GM18951 (cell line): ENCODE measurements at regions of chr6 and their contacts with region 1.

Region 1: GRCh38 chr6:116298973-116299372 is 19.2 kb upstream of the TSPYL1 start:
- POLR2A ChIP-seq: no peak

Region 2: DNA sequence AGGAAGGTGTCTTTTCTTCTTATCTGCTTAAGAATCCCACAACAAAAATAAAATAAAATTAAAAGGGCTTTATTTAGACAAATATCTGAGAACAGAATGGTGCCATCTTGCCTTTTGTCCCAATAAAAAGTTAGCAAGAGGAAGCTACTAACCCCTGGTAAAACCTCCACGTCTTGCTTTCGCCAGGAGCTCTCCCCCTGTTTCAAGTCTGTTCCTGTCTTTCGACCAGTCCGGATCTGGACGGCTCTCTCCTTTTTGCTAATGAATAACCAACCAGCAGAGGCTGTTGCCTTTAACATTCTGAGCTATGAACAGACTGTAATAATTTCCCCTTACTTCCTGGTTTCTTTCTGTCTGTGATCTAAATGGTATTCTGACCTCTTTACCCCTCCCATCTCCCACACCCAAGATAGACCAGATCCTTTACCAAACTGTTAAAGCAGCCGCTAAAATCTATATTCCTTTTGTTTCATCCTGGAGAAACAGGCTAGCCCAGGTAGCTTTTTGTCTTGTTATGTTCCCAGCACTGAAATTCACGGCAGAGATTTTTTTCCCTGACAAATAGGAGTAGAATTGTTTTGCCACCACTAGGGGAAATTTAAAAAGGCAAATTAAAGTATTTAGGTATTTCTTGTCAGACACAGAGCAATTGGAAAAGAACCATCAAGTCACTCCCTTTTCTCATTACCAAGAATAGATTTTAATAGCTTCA is 238.2 kb before region 1 on chr6 and contains the start of gene FRK:
- in situ Hi-C with region 1: no loop called
- POLR2A ChIP-seq: no peak

Region 3: DNA sequence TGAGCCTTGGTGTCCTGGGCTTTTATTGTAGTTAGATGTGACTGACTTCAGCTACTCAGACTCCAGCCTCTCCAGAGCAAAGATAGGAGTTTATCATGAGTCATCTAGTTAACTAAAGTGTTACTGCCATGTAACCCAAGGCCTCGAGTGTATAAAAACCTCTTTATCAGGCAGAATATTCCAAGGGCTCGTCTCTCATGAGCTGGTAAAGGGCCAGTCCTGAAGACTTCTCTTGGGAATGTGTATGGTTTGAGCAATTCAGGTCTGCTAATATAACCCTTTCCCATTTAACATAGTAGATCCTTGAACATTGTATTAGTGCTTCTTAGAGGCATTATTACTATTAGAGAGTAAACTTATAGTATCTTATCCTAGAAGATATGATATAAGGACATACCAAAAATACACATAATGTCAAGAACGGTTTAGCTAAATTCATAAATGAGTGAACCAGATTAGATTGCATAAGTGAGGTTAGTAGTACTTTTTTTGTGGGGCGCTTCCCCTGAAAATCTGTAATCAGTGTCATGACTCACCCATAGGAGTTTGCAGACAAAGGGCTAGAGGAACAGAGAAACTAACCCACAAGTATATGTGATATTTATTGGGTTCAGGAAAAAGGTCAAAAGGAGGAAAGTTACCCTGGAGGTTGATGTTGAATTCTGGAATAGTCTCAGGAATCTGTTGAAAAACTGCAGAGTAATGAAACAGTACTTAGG is 87.8 kb after region 1 on chr6:
- in situ Hi-C with region 1: no loop called
- POLR2A ChIP-seq: no peak

Region 4: DNA sequence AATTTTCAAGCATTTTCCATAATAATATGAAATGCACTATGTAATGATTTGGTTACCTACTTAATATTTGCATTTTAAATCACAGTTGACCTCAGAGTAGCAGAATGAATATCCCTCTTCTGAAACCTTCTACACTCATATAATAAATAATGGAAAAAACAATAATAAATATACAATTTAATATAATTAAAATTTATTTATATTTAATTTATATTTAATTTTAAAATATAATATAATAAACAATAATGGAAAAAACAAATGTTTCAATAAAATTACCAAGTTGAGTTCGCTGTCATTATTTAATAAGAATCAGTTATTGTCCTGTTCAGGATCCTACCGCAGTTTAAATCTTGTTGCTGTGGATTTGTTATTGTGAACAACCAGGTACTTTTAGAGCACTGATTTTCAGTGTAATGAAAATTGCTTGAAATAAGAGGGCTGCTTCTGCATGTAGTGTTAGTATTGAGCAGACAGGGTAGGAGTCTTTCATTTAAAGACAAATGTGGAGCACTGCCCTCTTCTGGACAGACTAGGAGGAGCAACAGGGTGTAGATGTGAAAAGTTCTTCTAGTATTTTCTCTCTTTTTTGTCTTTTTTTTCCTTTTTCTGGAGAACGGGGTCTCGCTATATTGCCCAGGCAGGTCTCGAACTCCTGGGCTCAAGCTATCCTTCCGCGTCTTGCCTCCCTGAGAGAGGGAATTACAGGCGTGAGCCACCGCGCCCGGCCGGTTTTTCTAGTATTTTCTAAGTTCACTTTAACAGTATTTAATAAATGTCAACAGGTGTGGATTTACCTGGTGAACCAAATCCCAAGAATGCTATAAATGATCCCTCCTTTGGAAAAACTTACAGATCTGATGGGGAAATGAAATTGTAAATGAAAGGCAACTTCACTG is 232.9 kb after region 1 on chr6:
- in situ Hi-C with region 1: loop called (anchors 10 kb)
- POLR2A ChIP-seq: no peak